ENCODE measurements at regions of chr5 and their contacts with region 1.

Region 1: GRCh38 chr5:123157791-123158581 is 68.9 kb downstream of the PRDM6 start:
- DNase-seq: peak; percentile 82
- H3K4me3 Mint-ChIP-seq: peak overlapping the region; percentile 47
- H3K27ac Mint-ChIP-seq: peak overlapping the region; percentile 68
- H3K4me1 Mint-ChIP-seq: peaks cover 20% of the 10 kb centered on the region
- H3K27me3 Mint-ChIP-seq: no peaks in the 10 kb centered on the region
- CTCF ChIP-seq: no peak

Region 2: GRCh38 chr5:122500245-122501075 is 657.5 kb before region 1 on chr5:
- CTCF ChIA-PET with region 1: interaction called, 3 read pairs
- POLR2A ChIA-PET with region 1: no interaction called
- intact Hi-C with region 1: loop called (anchors 10 kb)
- DNase-seq: peak; percentile 76
- H3K4me3 Mint-ChIP-seq: peak overlapping the region; percentile 5
- H3K27ac Mint-ChIP-seq: peak overlapping the region; percentile 71
- H3K4me1 Mint-ChIP-seq: peaks cover 23% of the 10 kb centered on the region
- H3K27me3 Mint-ChIP-seq: no peaks in the 10 kb centered on the region
- CTCF ChIP-seq: peak; percentile 53

Region 3: DNA sequence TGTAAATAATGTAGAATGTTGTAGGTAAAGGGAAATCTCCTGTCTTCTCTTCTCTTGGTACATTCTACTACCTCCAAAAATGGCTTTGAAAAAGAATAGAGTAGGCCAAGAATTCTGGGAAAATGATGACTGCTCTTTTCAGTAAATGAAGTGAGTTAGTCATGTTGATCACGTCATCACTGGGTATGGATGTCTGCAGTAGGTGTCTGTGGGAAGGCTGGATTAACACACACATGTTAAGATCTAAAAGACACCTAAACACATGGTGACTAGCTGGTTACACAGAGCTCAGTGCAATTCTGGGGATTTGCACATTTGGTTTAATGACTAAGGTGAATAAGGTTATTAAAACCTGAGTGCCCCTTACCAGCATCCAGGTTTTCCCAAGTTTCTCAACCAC is 103.8 kb after region 1 on chr5:
- CTCF ChIA-PET with region 1: no interaction called
- POLR2A ChIA-PET with region 1: no interaction called
- intact Hi-C with region 1: no loop called
- DNase-seq: peak; percentile 56
- H3K4me3 Mint-ChIP-seq: no peak overlapping the region
- H3K27ac Mint-ChIP-seq: no peak overlapping the region
- H3K4me1 Mint-ChIP-seq: peaks cover 6% of the 10 kb centered on the region
- H3K27me3 Mint-ChIP-seq: no peaks in the 10 kb centered on the region
- CTCF ChIP-seq: no peak

Measured in MCF 10A (cell line).